ENCODE measurements at regions of chr16 and their contacts with region 1.

Region 1: GRCh38 chr16:22077700-22078313 is 14.5 kb upstream of the VWA3A start:
- DNase-seq: peak; percentile 36 to 56 (median 53)
- H3K4me3 ChIP-seq: no peak overlapping the region
- H3K4me3 Mint-ChIP-seq: no peak overlapping the region
- H3K27ac ChIP-seq: no peak overlapping the region
- H3K27ac Mint-ChIP-seq: peak overlapping the region in 1 of 7 donors; percentile 45
- H3K4me1 ChIP-seq: no peaks in the 10 kb centered on the region
- H3K4me1 Mint-ChIP-seq: peaks cover 2% of the 10 kb centered on the region
- H3K27me3 ChIP-seq: no peaks in the 10 kb centered on the region
- H3K27me3 Mint-ChIP-seq: no peaks in the 10 kb centered on the region
- CTCF ChIP-seq: peak; percentile 84

Region 2: GRCh38 chr16:22001591-22001990 is 76.2 kb before region 1 on chr16:
- intact Hi-C with region 1: loop called (anchors 5 kb)
- DNase-seq: no peak
- H3K4me3 ChIP-seq: no peak overlapping the region
- H3K4me3 Mint-ChIP-seq: no peak overlapping the region
- H3K27ac ChIP-seq: no peak overlapping the region
- H3K27ac Mint-ChIP-seq: no peak overlapping the region
- H3K4me1 ChIP-seq: peaks cover 5 to 8% of the 10 kb centered on the region in 2 donors
- H3K4me1 Mint-ChIP-seq: peaks cover 14% of the 10 kb centered on the region
- H3K27me3 ChIP-seq: peaks cover 0 to 3% of the 10 kb centered on the region in 2 donors
- H3K27me3 Mint-ChIP-seq: peaks cover 0 to 17% (median 4%) of the 10 kb centered on the region in 3 donors
- CTCF ChIP-seq: no peak

Measured in CD14-positive monocyte (primary cell).